Activated naive CD4-positive, alpha-beta T cell treated with anti-CD3 and anti-CD28 coated beads for 36 hours (primary cell): ENCODE measurements at regions of chr20 and their contacts with region 1.

Region 1: DNA sequence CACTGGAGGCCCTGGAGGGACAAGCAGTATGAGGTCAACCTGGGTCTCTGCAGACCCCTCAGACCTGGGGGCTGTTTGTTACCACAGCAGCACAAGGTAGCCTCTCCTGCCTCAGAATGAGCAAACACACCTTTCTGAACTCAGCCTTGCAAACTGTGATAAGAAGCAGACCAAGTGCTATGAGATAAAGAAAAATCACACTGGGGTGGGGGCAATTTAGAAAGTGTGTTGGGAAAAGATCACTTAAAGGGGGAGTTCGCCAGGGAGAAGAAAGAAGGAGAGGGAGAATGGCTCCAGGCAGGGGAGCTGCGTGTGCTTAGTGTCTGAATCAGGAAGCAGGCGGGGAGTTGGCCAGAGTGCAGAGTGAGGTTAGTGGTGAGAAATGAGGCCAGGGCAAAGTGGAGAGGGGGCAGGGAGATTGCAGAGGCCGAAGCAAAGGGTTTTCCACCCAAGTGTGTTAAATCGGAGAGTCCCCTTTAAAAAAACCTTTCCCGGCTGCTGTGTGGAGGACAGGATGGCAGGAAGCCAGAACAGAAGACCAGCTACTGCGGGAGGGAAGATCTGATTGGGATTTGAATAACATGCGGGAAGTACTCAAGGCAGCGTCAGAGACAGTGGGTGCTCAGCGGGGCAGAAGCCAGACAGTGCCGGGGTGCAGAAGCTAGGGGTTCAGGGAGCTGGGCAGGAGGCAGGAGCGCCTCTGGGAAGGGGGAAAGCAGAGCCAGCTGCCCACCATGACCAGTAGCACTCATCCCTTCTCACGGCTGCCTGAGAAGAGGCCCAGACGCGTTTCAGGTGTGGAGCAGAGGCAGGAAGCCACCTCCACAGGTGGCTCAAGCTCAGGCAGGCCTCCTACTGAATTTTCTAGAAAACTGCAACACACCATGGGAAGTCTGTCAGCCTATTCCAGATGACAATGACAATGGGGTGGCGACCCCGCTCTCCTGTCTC is 9.0 kb downstream of the ADA start:
- DNase-seq: peak; percentile 52
- H3K4me3 Mint-ChIP-seq: peak overlapping the region; percentile 19
- H3K27ac Mint-ChIP-seq: peak overlapping the region; percentile 57
- H3K4me1 Mint-ChIP-seq: peaks cover 60% of the 10 kb centered on the region
- H3K27me3 Mint-ChIP-seq: no peaks in the 10 kb centered on the region

Region 2: GRCh38 chr20:44666066-44666465 is 23.6 kb after region 1 on chr20:
- CTCF ChIA-PET with region 1: interaction called, 4 read pairs
- intact Hi-C with region 1: loop called (anchors 2 kb)
- DNase-seq: no peak
- H3K4me3 Mint-ChIP-seq: no peak overlapping the region
- H3K27ac Mint-ChIP-seq: no peak overlapping the region
- H3K4me1 Mint-ChIP-seq: peaks cover 17% of the 10 kb centered on the region
- H3K27me3 Mint-ChIP-seq: no peaks in the 10 kb centered on the region

Region 3: GRCh38 chr20:44800398-44801046 is 158.0 kb after region 1 on chr20:
- CTCF ChIA-PET with region 1: no interaction called
- intact Hi-C with region 1: no loop called
- DNase-seq: peak; percentile 16
- H3K4me3 Mint-ChIP-seq: no peak overlapping the region
- H3K27ac Mint-ChIP-seq: no peak overlapping the region
- H3K4me1 Mint-ChIP-seq: no peaks in the 10 kb centered on the region
- H3K27me3 Mint-ChIP-seq: peaks cover 3% of the 10 kb centered on the region